PC-3 (cell line): ENCODE measurements at regions of chr4 and their contacts with region 1.

Region 1: GRCh38 chr4:78775303-78776030 is 683 bp upstream of the BMP2K start:
- DNase-seq: peak; percentile 65
- ATAC-seq: peak; percentile 50
- H3K4me3 ChIP-seq: peak overlapping the region; percentile 87
- H3K27ac ChIP-seq: peak overlapping the region; percentile 72
- H3K4me1 ChIP-seq: peaks cover 35% of the 10 kb centered on the region
- H3K27me3 ChIP-seq: no peaks in the 10 kb centered on the region
- CTCF ChIP-seq: no peak

Region 2: GRCh38 chr4:78056265-78057129 is 719.0 kb before region 1 on chr4:
- CTCF ChIA-PET with region 1: no interaction called
- POLR2A ChIA-PET with region 1: interaction called, 3 read pairs
- intact Hi-C with region 1: loop called (anchors 2 kb)
- DNase-seq: peak; percentile 92
- ATAC-seq: peak; percentile 72
- H3K4me3 ChIP-seq: peak overlapping the region; percentile 89
- H3K27ac ChIP-seq: peak overlapping the region; percentile 43
- H3K4me1 ChIP-seq: peaks cover 4% of the 10 kb centered on the region; the same call in 1 of the 2 replicates
- H3K27me3 ChIP-seq: peaks cover 13% of the 10 kb centered on the region; the same call in 1 of the 2 replicates
- CTCF ChIP-seq: peak; percentile 35; the same call in 1 of the 2 replicates

Region 3: DNA sequence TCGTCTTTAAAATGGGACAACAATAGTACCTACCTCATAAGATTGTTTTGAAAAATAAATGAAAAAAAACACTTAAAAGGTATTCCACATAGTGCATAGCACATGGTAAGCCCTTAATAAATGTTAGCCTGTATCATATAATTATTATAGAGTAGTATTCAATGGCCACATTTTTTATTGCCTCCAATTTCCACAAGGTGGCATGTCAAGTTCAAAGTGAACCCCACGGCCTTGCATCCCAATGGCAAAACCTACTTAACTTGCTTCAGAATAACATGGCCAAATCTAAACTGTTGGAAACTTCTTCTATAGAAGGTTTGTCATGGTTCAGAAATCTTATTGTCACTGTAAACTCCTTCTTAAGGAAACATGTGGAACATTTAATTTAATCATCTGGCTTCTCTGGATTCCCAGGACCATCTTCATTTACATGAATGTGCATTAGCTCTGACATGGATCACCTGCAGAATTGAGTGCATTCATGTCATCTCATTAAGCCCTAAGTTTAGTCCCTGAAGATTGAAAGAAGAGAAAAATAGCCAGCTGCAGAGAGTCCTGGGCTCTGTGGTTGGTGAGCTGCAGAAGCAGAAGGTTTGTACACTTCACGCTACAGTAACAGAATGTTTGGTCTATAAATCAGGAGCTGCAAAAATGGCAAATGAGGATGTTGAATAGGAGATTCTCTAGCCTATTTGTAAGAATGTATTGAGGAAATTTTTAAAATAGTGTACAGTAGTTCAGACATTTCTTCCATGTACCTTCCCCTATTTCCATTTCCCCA is 162.9 kb before region 1 on chr4:
- CTCF ChIA-PET with region 1: no interaction called
- POLR2A ChIA-PET with region 1: no interaction called
- intact Hi-C with region 1: loop called (anchors 10 kb)
- DNase-seq: peak; percentile 54
- ATAC-seq: peak; percentile 57
- H3K4me3 ChIP-seq: no peak overlapping the region
- H3K27ac ChIP-seq: no peak overlapping the region
- H3K4me1 ChIP-seq: no peaks in the 10 kb centered on the region
- H3K27me3 ChIP-seq: no peaks in the 10 kb centered on the region
- CTCF ChIP-seq: peak; percentile 72

Region 4: DNA sequence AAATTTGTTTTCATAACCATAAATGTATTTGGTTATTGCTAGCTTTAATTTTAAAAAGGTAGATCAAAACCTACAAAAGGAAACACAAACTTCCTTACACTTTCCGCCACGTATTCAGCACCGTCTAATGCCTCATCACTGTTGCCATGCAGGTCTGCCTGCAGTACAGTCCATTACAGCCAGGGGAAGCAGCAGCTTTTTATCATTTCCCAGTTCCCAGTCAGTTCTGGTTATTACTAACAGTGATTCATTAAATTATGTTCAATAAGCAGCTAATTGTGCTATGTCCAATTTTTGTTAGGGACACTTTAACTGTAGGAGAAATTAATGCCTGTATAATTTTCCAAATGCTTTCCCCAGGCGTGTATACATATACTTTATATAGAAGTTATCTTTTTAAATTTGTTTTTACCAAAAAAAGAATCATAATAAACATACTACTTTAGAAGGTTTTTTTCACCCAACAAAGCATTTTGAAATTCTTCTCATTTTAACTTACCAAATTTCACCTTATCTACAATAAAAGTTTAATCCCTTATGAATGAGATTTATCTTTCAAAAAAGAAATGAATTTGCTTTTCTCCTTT is 130.6 kb before region 1 on chr4:
- CTCF ChIA-PET with region 1: interaction called, 6 read pairs
- POLR2A ChIA-PET with region 1: no interaction called
- intact Hi-C with region 1: loop called (anchors 5 kb)
- DNase-seq: peak; percentile 76
- ATAC-seq: peak; percentile 62
- H3K4me3 ChIP-seq: peak overlapping the region; percentile 60
- H3K27ac ChIP-seq: peak overlapping the region; percentile 93
- H3K4me1 ChIP-seq: peaks cover 42% of the 10 kb centered on the region
- H3K27me3 ChIP-seq: no peaks in the 10 kb centered on the region
- CTCF ChIP-seq: peak; percentile 68

Region 5: GRCh38 chr4:78661921-78662521 is 113.4 kb before region 1 on chr4:
- CTCF ChIA-PET with region 1: interaction called, 3 read pairs
- POLR2A ChIA-PET with region 1: no interaction called
- intact Hi-C with region 1: loop called (anchors 5 kb)
- DNase-seq: peak; percentile 30
- ATAC-seq: peak; percentile 70
- H3K4me3 ChIP-seq: no peak overlapping the region
- H3K27ac ChIP-seq: no peak overlapping the region
- H3K4me1 ChIP-seq: peaks cover 37% of the 10 kb centered on the region
- H3K27me3 ChIP-seq: no peaks in the 10 kb centered on the region
- CTCF ChIP-seq: no peak

Region 6: GRCh38 chr4:78764498-78764961 is 10.9 kb before region 1 on chr4:
- CTCF ChIA-PET with region 1: no interaction called
- POLR2A ChIA-PET with region 1: interaction called, 18 read pairs
- intact Hi-C with region 1: no loop called
- DNase-seq: peak; percentile 19
- ATAC-seq: no peak
- H3K4me3 ChIP-seq: no peak overlapping the region
- H3K27ac ChIP-seq: no peak overlapping the region
- H3K4me1 ChIP-seq: peaks cover 13% of the 10 kb centered on the region
- H3K27me3 ChIP-seq: no peaks in the 10 kb centered on the region
- CTCF ChIP-seq: no peak

Region 7: GRCh38 chr4:78809928-78810835 is 34.7 kb after region 1 on chr4:
- CTCF ChIA-PET with region 1: no interaction called
- POLR2A ChIA-PET with region 1: no interaction called
- intact Hi-C with region 1: no loop called
- DNase-seq: no peak
- ATAC-seq: no peak
- H3K4me3 ChIP-seq: no peak overlapping the region
- H3K27ac ChIP-seq: no peak overlapping the region
- H3K4me1 ChIP-seq: no peaks in the 10 kb centered on the region
- H3K27me3 ChIP-seq: no peaks in the 10 kb centered on the region
- CTCF ChIP-seq: no peak

Region 8: DNA sequence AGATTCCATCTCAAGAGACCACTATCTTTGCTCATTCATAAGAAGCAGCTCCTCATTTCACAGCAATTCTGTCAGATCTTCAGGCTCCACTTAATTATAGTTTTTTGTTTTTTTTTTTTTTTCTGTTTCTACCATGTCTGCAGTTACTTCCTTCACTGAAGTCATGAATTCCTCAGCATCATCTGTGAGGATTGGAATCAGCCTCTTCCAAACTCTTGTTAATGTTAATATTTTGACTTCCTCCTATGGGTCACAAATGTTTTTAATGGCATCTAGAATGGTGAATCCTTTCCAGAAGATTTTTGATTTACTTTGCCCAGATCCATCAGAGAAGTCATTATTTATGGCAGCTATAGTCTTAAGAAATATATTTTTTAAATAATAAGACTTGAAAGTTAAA is 53.8 kb after region 1 on chr4:
- CTCF ChIA-PET with region 1: no interaction called
- POLR2A ChIA-PET with region 1: no interaction called
- intact Hi-C with region 1: no loop called
- DNase-seq: no peak
- ATAC-seq: no peak
- H3K4me3 ChIP-seq: no peak overlapping the region
- H3K27ac ChIP-seq: no peak overlapping the region
- H3K4me1 ChIP-seq: no peaks in the 10 kb centered on the region
- H3K27me3 ChIP-seq: no peaks in the 10 kb centered on the region
- CTCF ChIP-seq: no peak

Region 9: GRCh38 chr4:78864405-78865024 is 89.0 kb after region 1 on chr4:
- CTCF ChIA-PET with region 1: no interaction called
- POLR2A ChIA-PET with region 1: no interaction called
- intact Hi-C with region 1: loop called (anchors 2 kb)
- DNase-seq: peak; percentile 78
- ATAC-seq: 0 out of 2 replicates have a peak, but pooled peaks have one; percentile 31
- H3K4me3 ChIP-seq: no peak overlapping the region
- H3K27ac ChIP-seq: no peak overlapping the region
- H3K4me1 ChIP-seq: no peaks in the 10 kb centered on the region
- H3K27me3 ChIP-seq: no peaks in the 10 kb centered on the region
- CTCF ChIP-seq: peak; percentile 68